ENCODE measurements at regions of chr20 and their contacts with region 1.

Region 1: DNA sequence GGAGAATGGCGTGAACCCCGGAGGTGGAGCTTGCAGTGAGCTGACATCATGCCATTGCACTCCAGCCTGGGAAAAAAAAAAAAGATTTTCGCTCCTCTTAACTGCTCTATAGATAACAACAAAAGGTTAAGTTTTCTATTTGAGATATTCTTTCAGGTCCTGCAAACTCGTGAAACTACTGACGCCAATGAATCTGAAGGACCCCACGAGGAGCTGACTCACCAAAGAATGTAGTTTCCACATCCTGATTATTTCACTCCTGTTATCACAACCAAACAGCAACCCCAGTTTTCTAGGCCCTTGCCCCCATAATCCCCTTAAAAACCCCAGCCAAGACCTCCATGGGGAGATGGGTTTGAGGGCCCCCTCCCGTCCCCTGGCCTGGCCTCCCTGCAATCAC is 58.7 kb downstream of the OTOR start:
- DNase-seq: no peak
- H3K4me3 ChIP-seq: no peak overlapping the region
- H3K27ac ChIP-seq: no peak overlapping the region
- H3K4me1 ChIP-seq: no peaks in the 10 kb centered on the region
- H3K27me3 ChIP-seq: peaks cover 60% of the 10 kb centered on the region

Region 2: GRCh38 chr20:15561707-15562404 is 1245.0 kb before region 1 on chr20:
- in situ Hi-C with region 1: no loop called
- DNase-seq: no peak
- H3K4me3 ChIP-seq: no peak overlapping the region
- H3K27ac ChIP-seq: no peak overlapping the region
- H3K4me1 ChIP-seq: no peaks in the 10 kb centered on the region
- H3K27me3 ChIP-seq: no peaks in the 10 kb centered on the region

Region 3: GRCh38 chr20:17417225-17417624 is 610.3 kb after region 1 on chr20:
- in situ Hi-C with region 1: no loop called
- DNase-seq: peak; percentile 7
- H3K4me3 ChIP-seq: no peak overlapping the region
- H3K27ac ChIP-seq: no peak overlapping the region
- H3K4me1 ChIP-seq: no peaks in the 10 kb centered on the region
- H3K27me3 ChIP-seq: 0 out of 2 replicates have a peak, but pooled peaks cover 3% of the 10 kb centered on the region

Region 4: DNA sequence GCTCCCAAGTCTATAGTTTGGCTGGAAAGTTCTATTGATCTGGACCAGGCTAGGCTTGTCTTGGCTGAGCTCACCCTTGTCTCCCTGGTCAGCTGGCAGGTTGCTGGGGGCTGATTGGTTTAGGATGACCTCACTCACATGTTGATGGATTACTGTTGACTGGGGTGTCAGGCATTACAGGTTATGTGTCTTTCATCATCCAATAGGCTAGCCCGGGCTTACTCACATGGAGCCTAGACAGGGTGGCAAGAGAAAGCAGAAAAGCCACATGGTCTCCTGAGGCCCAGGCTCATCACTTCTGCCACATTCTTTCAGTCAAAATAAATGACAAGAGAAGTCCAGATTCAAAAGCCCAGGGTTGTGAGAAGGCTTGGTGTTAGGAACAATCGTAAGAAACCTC is 620.8 kb after region 1 on chr20:
- in situ Hi-C with region 1: loop called (anchors 5 kb)
- DNase-seq: no peak
- H3K4me3 ChIP-seq: no peak overlapping the region
- H3K27ac ChIP-seq: no peak overlapping the region
- H3K4me1 ChIP-seq: no peaks in the 10 kb centered on the region
- H3K27me3 ChIP-seq: 0 out of 2 replicates have a peak, but pooled peaks cover 3% of the 10 kb centered on the region

Measured in GM23248 (cell line).